ENCODE measurements at regions of chr5 and their contacts with region 1.

Region 1: DNA sequence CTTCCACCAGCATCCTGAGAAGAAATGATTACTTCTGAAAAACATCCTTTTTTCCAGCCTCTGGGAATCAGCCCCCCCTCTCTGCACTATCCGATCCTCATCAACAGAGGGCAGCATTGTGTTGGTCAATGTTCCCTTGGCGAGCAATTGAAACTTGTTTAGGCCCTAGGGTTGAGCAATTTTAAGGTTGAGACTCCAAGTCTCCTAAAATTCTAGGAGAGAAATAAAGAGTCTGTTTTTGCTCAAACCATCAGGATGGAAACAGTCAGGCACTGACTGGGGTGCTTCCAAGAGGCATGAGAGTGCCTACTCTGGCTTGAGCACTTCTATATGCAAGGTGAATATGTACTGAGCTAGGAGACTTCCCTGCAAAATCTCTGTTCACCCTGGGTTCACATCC is 12.4 kb upstream of the CYFIP2 start:
- DNase-seq: peak; percentile 75
- ATAC-seq: peak; percentile 91
- H3K4me3 ChIP-seq: peak overlapping the region in 2 of 5 experiments; percentile 13 to 34
- H3K4me3 Mint-ChIP-seq: peak overlapping the region; percentile 71
- H3K27ac ChIP-seq: no peak overlapping the region
- H3K27ac Mint-ChIP-seq: peak overlapping the region; percentile 82
- H3K4me1 ChIP-seq: peaks cover 21 to 23% of the 10 kb centered on the region in 2 donors
- H3K4me1 Mint-ChIP-seq: peaks cover 29% of the 10 kb centered on the region
- H3K27me3 ChIP-seq: no peaks in the 10 kb centered on the region
- H3K27me3 Mint-ChIP-seq: no peaks in the 10 kb centered on the region
- CTCF ChIP-seq: peak; percentile 96

Region 2: GRCh38 chr5:156647034-156647451 is 606.5 kb before region 1 on chr5:
- CTCF ChIA-PET with region 1: no interaction called
- POLR2A ChIA-PET with region 1: no interaction called
- intact Hi-C with region 1: no loop called
- DNase-seq: no peak
- ATAC-seq: no peak
- H3K4me3 ChIP-seq: no peak overlapping the region
- H3K4me3 Mint-ChIP-seq: no peak overlapping the region
- H3K27ac ChIP-seq: no peak overlapping the region
- H3K27ac Mint-ChIP-seq: no peak overlapping the region
- H3K4me1 ChIP-seq: no peaks in the 10 kb centered on the region
- H3K4me1 Mint-ChIP-seq: no peaks in the 10 kb centered on the region
- H3K27me3 ChIP-seq: peaks cover 0 to 3% (median 0%) of the 10 kb centered on the region in 4 experiments
- H3K27me3 Mint-ChIP-seq: peaks cover 10% of the 10 kb centered on the region
- CTCF ChIP-seq: no peak

Region 3: DNA sequence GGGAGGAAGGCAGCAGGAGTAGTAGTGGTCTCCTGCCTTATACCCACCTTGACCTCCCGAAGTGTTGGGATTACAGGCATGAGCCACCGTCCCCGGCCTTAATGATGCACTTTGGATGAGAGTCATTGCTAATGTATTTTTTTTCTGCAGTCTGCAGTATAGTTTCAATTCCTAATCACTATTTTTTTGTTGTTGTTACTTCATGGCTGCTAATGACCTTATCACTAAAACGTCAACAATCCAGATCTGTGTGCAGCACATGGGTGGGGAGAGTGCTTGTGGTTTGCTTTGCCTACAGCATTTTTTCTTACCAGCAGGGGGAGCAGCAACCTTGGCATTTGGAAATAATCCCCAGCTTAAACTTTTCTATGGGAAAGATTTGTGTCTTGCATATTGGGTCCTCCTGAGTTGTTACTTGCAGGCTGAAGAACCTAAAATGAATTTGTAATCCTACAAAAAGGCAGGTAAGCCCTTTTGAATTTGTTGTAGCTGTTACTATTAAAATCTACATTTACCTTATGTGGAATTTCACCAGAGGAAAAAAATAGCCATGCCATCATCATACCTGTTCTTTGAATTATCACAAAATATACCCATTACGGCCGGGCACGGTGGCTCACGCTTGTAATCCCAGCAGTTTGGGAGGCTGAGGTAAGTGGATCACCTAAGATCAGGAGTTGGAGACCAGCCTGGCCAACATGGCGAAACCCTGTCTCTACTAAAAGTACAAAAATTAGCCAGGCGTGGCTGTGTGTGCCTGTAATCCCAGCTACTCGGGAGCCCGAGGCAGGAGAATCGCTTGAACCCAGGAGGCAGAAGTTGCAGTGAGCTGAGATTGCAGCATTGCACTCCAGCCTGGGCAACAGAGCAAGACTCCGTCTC is 104.6 kb before region 1 on chr5:
- CTCF ChIA-PET with region 1: interaction called, 83 read pairs
- POLR2A ChIA-PET with region 1: no interaction called
- intact Hi-C with region 1: loop called (anchors 1 kb)
- DNase-seq: peak; percentile 80
- ATAC-seq: peak; percentile 81
- H3K4me3 ChIP-seq: no peak overlapping the region
- H3K4me3 Mint-ChIP-seq: no peak overlapping the region
- H3K27ac ChIP-seq: no peak overlapping the region
- H3K27ac Mint-ChIP-seq: no peak overlapping the region
- H3K4me1 ChIP-seq: peaks cover 2 to 5% of the 10 kb centered on the region in 2 donors
- H3K4me1 Mint-ChIP-seq: peaks cover 5% of the 10 kb centered on the region
- H3K27me3 ChIP-seq: no peaks in the 10 kb centered on the region
- H3K27me3 Mint-ChIP-seq: no peaks in the 10 kb centered on the region
- CTCF ChIP-seq: peak; percentile 97

Region 4: DNA sequence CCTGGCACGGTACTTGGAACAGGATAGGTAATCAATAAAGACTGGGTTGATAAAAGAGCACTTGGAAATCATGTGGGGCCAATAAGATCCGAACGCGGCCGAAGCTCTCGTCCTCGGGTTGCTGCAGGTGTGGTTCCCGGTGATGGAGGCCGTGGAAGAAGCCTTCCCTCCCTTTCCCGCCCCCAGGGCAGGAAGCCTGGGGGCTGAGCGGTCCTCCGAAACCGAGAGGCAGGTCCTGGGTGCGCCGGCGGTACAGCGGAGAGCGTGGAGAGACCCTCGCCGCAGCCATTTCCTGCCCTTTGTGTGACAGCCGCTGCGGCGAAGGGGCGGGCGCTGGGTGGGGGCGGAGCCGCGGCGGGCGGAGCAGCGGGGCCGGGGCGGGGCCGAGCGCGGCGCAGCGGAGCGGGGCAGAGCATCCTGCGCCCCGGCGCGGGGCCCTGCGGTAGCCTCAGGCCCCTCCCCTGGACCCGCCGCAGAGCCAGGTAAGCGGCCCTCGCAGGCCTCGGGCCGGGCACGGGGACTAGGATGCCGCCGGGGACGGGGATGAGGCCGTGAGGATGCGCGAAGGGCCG is 12.3 kb after region 1 on chr5 and contains the start of gene CYFIP2:
- CTCF ChIA-PET with region 1: interaction called, 99 read pairs
- POLR2A ChIA-PET with region 1: interaction called, 5 read pairs
- intact Hi-C with region 1: loop called (anchors 1 kb)
- DNase-seq: peak; percentile 89
- ATAC-seq: peak; percentile 89
- H3K4me3 ChIP-seq: peak within 1 kb of the TSS; percentile 62 to 85 (median 73)
- H3K4me3 Mint-ChIP-seq: peak within 1 kb of the TSS; percentile 99
- H3K27ac ChIP-seq: peak within 1 kb of the TSS; percentile 99
- H3K27ac Mint-ChIP-seq: peak within 1 kb of the TSS; percentile 99
- H3K4me1 ChIP-seq: peaks cover 65 to 69% of the 10 kb centered on the region in 2 donors
- H3K4me1 Mint-ChIP-seq: peaks cover 70% of the 10 kb centered on the region
- H3K27me3 ChIP-seq: no peaks in the 10 kb centered on the region
- H3K27me3 Mint-ChIP-seq: no peaks in the 10 kb centered on the region
- CTCF ChIP-seq: no peak
- total RNA-seq, gene CYFIP2: 663 and 681 TPM in 2 replicates

Region 5: GRCh38 chr5:157283434-157283833 is 29.9 kb after region 1 on chr5:
- CTCF ChIA-PET with region 1: interaction called, 40 read pairs
- POLR2A ChIA-PET with region 1: no interaction called
- intact Hi-C with region 1: loop called (anchors 1 kb)
- DNase-seq: peak; percentile 91
- ATAC-seq: peak; percentile 100
- H3K4me3 ChIP-seq: peak overlapping the region in 1 of 5 experiments; percentile 16
- H3K4me3 Mint-ChIP-seq: peak overlapping the region; percentile 50
- H3K27ac ChIP-seq: peak overlapping the region; percentile 63 to 75
- H3K27ac Mint-ChIP-seq: peak overlapping the region; percentile 84
- H3K4me1 ChIP-seq: peaks cover 47 to 56% of the 10 kb centered on the region in 2 donors
- H3K4me1 Mint-ChIP-seq: peaks cover 70% of the 10 kb centered on the region
- H3K27me3 ChIP-seq: no peaks in the 10 kb centered on the region
- H3K27me3 Mint-ChIP-seq: no peaks in the 10 kb centered on the region
- CTCF ChIP-seq: no peak

Region 6: GRCh38 chr5:157312492-157312891 is 58.9 kb after region 1 on chr5:
- CTCF ChIA-PET with region 1: interaction called, 495 read pairs
- POLR2A ChIA-PET with region 1: interaction called, 3 read pairs
- intact Hi-C with region 1: loop called (anchors 1 kb)
- DNase-seq: peak; percentile 79
- ATAC-seq: peak; percentile 84
- H3K4me3 ChIP-seq: no peak overlapping the region
- H3K4me3 Mint-ChIP-seq: no peak overlapping the region
- H3K27ac ChIP-seq: peak overlapping the region; percentile 13 to 53
- H3K27ac Mint-ChIP-seq: peak overlapping the region; percentile 70
- H3K4me1 ChIP-seq: peaks cover 5 to 26% of the 10 kb centered on the region in 2 donors
- H3K4me1 Mint-ChIP-seq: peaks cover 30% of the 10 kb centered on the region
- H3K27me3 ChIP-seq: no peaks in the 10 kb centered on the region
- H3K27me3 Mint-ChIP-seq: no peaks in the 10 kb centered on the region
- CTCF ChIP-seq: peak; percentile 84